ENCODE measurements at regions of chr15 and their contacts with region 1.

Region 1: GRCh38 chr15:62782039-62782791 is 260.3 kb upstream of the TPM1 start:
- DNase-seq: peak; percentile 53 to 63
- H3K4me3 ChIP-seq: no peak overlapping the region
- H3K4me3 Mint-ChIP-seq: no peak overlapping the region
- H3K27ac Mint-ChIP-seq: peak overlapping the region; percentile 33
- H3K4me1 ChIP-seq: no peaks in the 10 kb centered on the region
- H3K4me1 Mint-ChIP-seq: peaks cover 7% of the 10 kb centered on the region
- H3K27me3 ChIP-seq: no peaks in the 10 kb centered on the region
- H3K27me3 Mint-ChIP-seq: no peaks in the 10 kb centered on the region
- CTCF ChIP-seq: peak; percentile 54 to 55

Region 2: DNA sequence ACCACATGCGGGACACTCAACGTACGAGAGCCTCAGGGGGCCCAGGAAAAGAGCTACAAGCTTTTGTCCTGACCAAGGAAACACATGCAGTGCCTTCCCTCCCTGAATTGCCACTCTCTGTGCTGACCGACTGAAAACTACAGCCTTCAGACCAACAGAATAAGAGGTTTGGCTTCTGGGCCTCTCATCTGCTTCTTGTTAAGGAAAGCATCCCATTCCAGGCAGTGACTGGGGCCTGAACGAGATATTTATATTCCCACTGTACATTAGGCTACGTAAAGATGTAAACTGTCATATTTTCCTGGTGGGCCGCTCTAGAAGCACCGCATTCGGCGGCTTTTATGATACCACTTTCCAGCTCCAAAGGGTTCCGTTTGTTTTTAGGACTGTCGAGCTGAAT is 51.4 kb after region 1 on chr15:
- CTCF ChIA-PET with region 1: no interaction called
- POLR2A ChIA-PET with region 1: no interaction called
- intact Hi-C with region 1: loop called (anchors 5 kb)
- DNase-seq: no peak
- H3K4me3 ChIP-seq: no peak overlapping the region
- H3K4me3 Mint-ChIP-seq: no peak overlapping the region
- H3K27ac Mint-ChIP-seq: no peak overlapping the region
- H3K4me1 ChIP-seq: peaks cover 13% of the 10 kb centered on the region
- H3K4me1 Mint-ChIP-seq: peaks cover 13% of the 10 kb centered on the region
- H3K27me3 ChIP-seq: no peaks in the 10 kb centered on the region
- H3K27me3 Mint-ChIP-seq: no peaks in the 10 kb centered on the region
- CTCF ChIP-seq: no peak

Region 3: DNA sequence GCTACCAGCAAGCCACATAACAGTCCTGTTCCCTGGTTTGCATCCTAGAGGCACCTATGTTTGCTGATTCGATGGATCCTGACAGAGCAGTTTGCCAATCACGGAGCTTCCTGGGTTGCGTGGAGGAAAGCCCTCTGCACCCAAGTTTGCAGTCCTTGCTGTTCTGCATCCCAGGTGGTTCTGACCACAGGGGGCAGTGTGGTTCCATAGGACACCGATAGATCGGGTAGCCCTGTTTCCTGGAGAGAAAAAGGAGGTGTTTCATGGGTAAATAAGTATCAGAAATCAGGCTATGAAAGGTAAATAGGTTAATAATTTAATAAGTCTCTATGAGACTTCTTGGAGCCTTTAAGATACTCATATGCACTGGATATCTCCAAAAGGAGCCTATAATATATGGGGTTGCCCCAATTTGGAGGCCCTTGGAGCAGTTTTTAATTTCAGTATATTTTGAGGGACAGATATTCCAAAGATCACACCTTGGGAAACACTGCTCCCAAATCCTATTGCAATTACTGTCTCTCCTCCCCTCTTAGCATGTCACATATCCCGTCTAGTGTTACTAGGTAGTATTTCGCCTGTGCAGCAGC is 65.8 kb after region 1 on chr15:
- CTCF ChIA-PET with region 1: interaction called, 3 read pairs
- POLR2A ChIA-PET with region 1: no interaction called
- intact Hi-C with region 1: loop called (anchors 5 kb)
- DNase-seq: peak; percentile 57 to 58
- H3K4me3 ChIP-seq: no peak overlapping the region
- H3K4me3 Mint-ChIP-seq: no peak overlapping the region
- H3K27ac Mint-ChIP-seq: peak overlapping the region; percentile 81
- H3K4me1 ChIP-seq: peaks cover 59% of the 10 kb centered on the region
- H3K4me1 Mint-ChIP-seq: peaks cover 52% of the 10 kb centered on the region
- H3K27me3 ChIP-seq: no peaks in the 10 kb centered on the region
- H3K27me3 Mint-ChIP-seq: no peaks in the 10 kb centered on the region
- CTCF ChIP-seq: peak; percentile 42 to 49

Region 4: DNA sequence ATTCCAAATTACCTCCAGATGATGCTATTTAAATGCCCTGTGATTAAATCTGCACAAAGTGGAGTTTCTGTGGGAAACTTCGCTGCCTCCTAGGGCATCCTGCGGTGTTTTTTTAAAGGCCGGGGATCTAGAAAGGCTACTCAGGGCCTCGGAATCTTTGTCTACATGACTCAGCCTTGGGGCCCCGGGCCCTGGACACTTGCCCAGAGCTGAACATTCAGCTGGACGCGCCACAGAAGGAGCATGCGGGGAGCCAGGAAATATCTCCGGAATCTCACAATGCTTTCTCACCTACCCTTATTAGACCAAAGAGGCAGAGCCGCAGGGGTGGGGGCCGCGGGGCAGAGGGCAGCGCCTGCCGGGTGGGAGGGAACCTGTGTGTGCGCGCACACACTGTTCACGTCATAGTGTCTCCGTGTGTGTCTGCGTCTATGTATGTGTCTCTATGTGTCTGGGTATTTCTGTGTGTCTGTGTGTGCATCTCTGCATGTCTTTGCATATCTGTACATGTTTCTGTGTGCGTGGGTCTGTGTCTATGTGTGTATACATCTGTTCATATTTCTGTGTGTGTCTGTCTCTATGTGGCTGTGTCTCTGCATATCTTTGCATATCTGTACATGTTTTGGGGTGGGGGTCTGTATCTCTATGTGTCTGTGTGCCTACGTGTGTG is 114.9 kb after region 1 on chr15:
- CTCF ChIA-PET with region 1: no interaction called
- POLR2A ChIA-PET with region 1: no interaction called
- intact Hi-C with region 1: loop called (anchors 5 kb)
- DNase-seq: peak; percentile 81 to 90
- H3K4me3 ChIP-seq: 0 out of 2 replicates have a peak overlapping the region, but pooled peaks have one; percentile 1
- H3K4me3 Mint-ChIP-seq: peak overlapping the region; percentile 55
- H3K27ac Mint-ChIP-seq: peak overlapping the region; percentile 53
- H3K4me1 ChIP-seq: peaks cover 48% of the 10 kb centered on the region
- H3K4me1 Mint-ChIP-seq: peaks cover 41% of the 10 kb centered on the region
- H3K27me3 ChIP-seq: no peaks in the 10 kb centered on the region
- H3K27me3 Mint-ChIP-seq: no peaks in the 10 kb centered on the region
- CTCF ChIP-seq: no peak

Region 5: GRCh38 chr15:63041974-63042819 is 260.0 kb after region 1 on chr15 and contains the start of gene TPM1:
- CTCF ChIA-PET with region 1: no interaction called
- POLR2A ChIA-PET with region 1: no interaction called
- intact Hi-C with region 1: loop called (anchors 2 kb)
- DNase-seq: peak; percentile 91 to 93
- H3K4me3 ChIP-seq: peak within 1 kb of the TSS; percentile 73
- H3K4me3 Mint-ChIP-seq: peak within 1 kb of the TSS; percentile 80
- H3K27ac Mint-ChIP-seq: peak within 1 kb of the TSS; percentile 96
- H3K4me1 ChIP-seq: peaks cover 60% of the 10 kb centered on the region
- H3K4me1 Mint-ChIP-seq: peaks cover 41% of the 10 kb centered on the region
- H3K27me3 ChIP-seq: no peaks in the 10 kb centered on the region
- H3K27me3 Mint-ChIP-seq: no peaks in the 10 kb centered on the region
- CTCF ChIP-seq: peak in 1 of 2 experiments; percentile 43
- total RNA-seq, gene TPM1: 193 and 209 TPM in 2 replicates

Region 6: GRCh38 chr15:63093486-63094205 is 311.4 kb after region 1 on chr15:
- CTCF ChIA-PET with region 1: interaction called, 3 read pairs
- POLR2A ChIA-PET with region 1: no interaction called
- intact Hi-C with region 1: loop called (anchors 1 kb)
- DNase-seq: peak; percentile 86 to 88
- H3K4me3 ChIP-seq: no peak overlapping the region
- H3K4me3 Mint-ChIP-seq: no peak overlapping the region
- H3K27ac Mint-ChIP-seq: no peak overlapping the region
- H3K4me1 ChIP-seq: peaks cover 6% of the 10 kb centered on the region
- H3K4me1 Mint-ChIP-seq: peaks cover 15% of the 10 kb centered on the region
- H3K27me3 ChIP-seq: no peaks in the 10 kb centered on the region
- H3K27me3 Mint-ChIP-seq: no peaks in the 10 kb centered on the region
- CTCF ChIP-seq: peak; percentile 77 to 82

Measured in Caco-2 (cell line).